ENCODE measurements at regions of chr2 and their contacts with region 1.

Region 1: GRCh38 chr2:99180755-99181623 is at the starts of genes MITD1 and MRPL30:
- DNase-seq: peak; percentile 92 to 95 (median 94)
- ATAC-seq: peak; percentile 99
- H3K4me3 ChIP-seq: peak within 1 kb of the TSS; percentile 99
- H3K27ac ChIP-seq: peak within 1 kb of the TSS; percentile 86
- H3K4me1 ChIP-seq: peaks cover 4% of the 10 kb centered on the region
- H3K27me3 ChIP-seq: no peaks in the 10 kb centered on the region
- total RNA-seq, gene MITD1: 10.4 to 20.6 (median 12.0) TPM
- total RNA-seq, gene MRPL30: 21.3 to 29.6 (median 27.1) TPM

Region 2: GRCh38 chr2:99337113-99338028 is 156.4 kb after region 1 on chr2 and contains the start of gene EIF5B:
- intact Hi-C with region 1: loop called in 2 of 4 experiments (anchors 10 kb)
- DNase-seq: peak; percentile 98 to 99 (median 99)
- ATAC-seq: peak; percentile 95
- H3K4me3 ChIP-seq: peak within 1 kb of the TSS; percentile 84
- H3K27ac ChIP-seq: peak within 1 kb of the TSS; percentile 98
- H3K4me1 ChIP-seq: peaks cover 2% of the 10 kb centered on the region
- H3K27me3 ChIP-seq: no peaks in the 10 kb centered on the region
- total RNA-seq, gene EIF5B: 67.1 to 79.9 (median 71.9) TPM